GM10248 (cell line): ENCODE measurements at regions of chr11 and their contacts with region 1.

Region 1: GRCh38 chr11:30346068-30346688 is 23.3 kb downstream of the ARL14EP start:
- DNase-seq: peak; percentile 24
- CTCF ChIP-seq: peak; percentile 33

Region 2: DNA sequence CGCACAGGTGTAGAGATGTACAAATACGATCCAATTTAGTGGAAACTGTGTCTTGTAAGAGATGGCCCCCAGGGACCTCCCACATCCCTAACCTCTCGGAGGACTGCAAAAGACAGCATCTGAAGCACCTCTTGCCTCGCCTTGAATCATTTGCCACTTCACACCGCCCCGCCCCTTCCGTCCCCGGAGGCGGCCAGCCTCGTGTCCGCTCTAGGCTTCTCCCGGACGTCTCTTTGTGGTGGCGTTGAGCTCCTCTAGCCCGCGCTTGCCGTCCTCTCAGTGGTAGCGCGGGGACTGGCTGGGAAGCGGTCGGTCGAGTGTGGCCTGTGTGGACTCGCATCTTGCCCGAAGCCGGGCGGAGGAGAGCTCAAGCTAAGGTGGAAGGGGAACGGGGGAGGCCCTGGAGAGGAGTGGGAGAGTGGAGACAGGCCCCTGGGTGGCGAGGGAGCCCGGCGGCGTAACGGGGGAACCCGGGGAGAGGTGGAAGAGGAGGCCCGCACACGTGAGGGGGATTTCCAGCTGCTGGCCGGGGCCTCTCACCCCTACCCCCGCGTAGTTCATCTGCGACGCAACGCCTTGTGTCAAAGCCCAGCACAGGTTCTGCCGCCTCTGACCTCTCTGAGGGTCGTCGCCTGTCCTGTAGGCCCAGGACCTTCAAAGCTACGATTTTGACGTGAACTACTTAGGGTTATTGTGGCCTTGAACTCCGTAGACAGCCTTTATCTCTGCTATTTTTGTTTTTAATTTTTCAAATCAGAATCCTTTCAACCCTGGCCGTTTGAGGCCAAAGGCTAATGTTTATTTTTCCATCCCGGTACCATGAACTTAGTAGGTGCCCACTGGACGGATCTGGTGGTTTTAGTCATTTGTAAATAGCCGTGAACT is 23.1 kb before region 1 on chr11 and contains the start of gene ARL14EP:
- CTCF ChIA-PET with region 1: interaction called, 16 read pairs
- POLR2A ChIA-PET with region 1: no interaction called
- DNase-seq: peak; percentile 88
- CTCF ChIP-seq: no peak

Region 3: DNA sequence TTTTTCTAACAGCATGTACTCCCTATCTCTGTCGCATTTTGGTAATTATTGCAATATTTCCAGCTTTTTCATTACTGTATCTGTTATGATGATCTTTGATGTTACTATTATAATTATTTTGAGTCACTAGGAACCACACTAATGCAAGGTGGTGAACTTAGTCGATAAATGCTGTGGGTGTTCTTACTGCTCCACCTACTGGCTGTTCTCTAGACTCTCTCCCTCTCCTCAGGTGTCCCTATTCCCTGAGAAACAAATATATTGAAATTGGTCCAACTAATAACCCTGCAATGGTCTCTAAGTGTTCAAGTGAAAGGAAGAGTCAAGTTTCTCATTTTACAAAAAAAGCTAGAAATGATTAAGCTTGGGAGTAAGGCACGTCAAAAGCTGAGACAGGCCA is 12.8 kb before region 1 on chr11:
- CTCF ChIA-PET with region 1: interaction called, 10 read pairs
- POLR2A ChIA-PET with region 1: no interaction called
- DNase-seq: no peak
- CTCF ChIP-seq: peak; percentile 44

Region 4: GRCh38 chr11:30392221-30392784 is 46.1 kb after region 1 on chr11:
- CTCF ChIA-PET with region 1: no interaction called
- POLR2A ChIA-PET with region 1: no interaction called
- DNase-seq: no peak
- CTCF ChIP-seq: no peak

Region 5: GRCh38 chr11:30917859-30918478 is 571.8 kb after region 1 on chr11:
- CTCF ChIA-PET with region 1: interaction called, 15 read pairs
- POLR2A ChIA-PET with region 1: no interaction called
- DNase-seq: peak; percentile 22
- CTCF ChIP-seq: peak; percentile 49